Testis (tissue), 5 donors: ENCODE measurements at regions of chr5 and their contacts with region 1.

Region 1: DNA sequence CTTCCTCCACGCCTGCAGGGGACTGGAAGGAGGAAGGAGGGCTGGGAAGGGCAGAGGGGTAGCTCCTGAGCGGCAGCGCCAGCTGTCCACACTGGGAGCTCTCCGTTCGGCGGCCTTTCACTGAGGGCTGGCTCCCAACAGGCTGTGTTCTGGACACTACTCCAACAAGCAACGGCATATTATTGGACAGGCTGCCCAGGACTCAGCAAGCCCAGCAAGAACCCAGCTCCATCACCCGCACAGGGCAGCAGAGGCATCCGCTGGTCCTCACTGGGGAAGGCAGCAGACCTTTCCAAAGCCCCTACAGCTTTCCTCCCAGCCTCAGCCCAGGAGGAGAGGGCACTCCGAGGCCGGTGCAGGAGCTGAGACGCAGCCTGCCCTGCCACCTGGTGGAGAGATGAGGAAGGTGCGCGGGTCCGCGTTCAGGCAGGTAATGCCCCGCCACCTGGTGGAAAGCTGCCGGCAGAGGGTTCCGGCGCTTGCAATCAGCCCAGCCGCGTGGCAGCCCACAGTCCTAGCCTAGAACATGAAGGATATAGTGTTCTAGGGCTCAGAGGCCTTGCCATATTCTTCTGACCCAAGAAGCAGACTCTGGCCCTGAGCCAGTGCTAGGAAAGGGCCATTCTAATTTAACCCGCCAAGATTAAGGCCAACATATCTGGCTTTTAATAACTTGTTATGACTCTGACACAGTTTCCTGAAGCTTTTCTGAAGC is 74.4 kb downstream of the NRG2 start:
- DNase-seq: peak; percentile 95
- H3K4me3 ChIP-seq: peak overlapping the region; percentile 14 to 24
- H3K27ac ChIP-seq: peak overlapping the region; percentile 9 to 47
- H3K4me1 ChIP-seq: peaks cover 13% of the 10 kb centered on the region
- H3K27me3 ChIP-seq: no peaks in the 10 kb centered on the region
- CTCF ChIP-seq: peak; percentile 99 to 100 (median 100)
- POLR2A ChIP-seq: no peak

Region 2: GRCh38 chr5:139787568-139788293 is 181.0 kb before region 1 on chr5:
- intact Hi-C with region 1: loop called (anchors 5 kb)
- DNase-seq: peak; percentile 93
- H3K4me3 ChIP-seq: peak overlapping the region; percentile 51 to 64
- H3K27ac ChIP-seq: peak overlapping the region; percentile 24 to 78
- H3K4me1 ChIP-seq: peaks cover 17% of the 10 kb centered on the region
- H3K27me3 ChIP-seq: no peaks in the 10 kb centered on the region
- CTCF ChIP-seq: peak; percentile 95 to 99 (median 98)
- POLR2A ChIP-seq: no peak

Region 3: DNA sequence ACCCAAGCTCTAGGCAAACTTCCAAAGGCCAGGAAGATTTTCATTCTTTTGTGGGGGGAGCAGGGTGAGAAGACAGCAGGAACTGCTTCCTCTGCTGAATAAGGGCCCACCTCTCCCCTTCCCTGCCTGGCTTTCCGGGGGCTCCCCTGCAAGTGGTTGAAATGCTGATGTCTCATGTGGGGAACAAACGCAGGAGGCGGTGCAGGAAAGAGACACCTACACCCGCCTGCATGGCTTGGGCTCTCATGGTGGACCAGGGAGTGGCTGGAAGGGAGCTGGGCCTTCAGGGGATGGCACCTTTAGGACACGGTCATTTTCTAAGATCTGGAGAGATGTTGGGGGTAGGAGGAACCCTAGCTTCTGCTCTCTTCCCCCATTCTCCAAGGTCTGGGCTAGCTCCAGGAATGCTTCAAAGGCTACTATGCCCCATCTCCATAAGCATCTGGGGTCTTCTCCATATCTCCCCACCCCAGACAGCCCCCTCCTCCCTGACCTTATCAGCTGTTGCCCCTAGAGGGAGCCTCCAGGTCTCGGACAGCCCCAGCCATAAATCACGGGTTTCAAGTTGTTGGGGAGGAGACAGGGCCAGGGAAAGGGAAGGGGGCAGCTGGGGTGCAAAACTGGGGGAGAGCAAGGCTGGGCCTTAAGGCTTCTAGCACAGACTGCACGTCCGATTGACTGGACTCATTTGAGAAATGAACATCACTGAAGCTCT is 96.5 kb before region 1 on chr5:
- intact Hi-C with region 1: loop called (anchors 10 kb)
- DNase-seq: no peak
- H3K4me3 ChIP-seq: no peak overlapping the region
- H3K27ac ChIP-seq: no peak overlapping the region
- H3K4me1 ChIP-seq: peaks cover 37% of the 10 kb centered on the region
- H3K27me3 ChIP-seq: no peaks in the 10 kb centered on the region
- CTCF ChIP-seq: no peak
- POLR2A ChIP-seq: no peak